ENCODE measurements at regions of chr10 and their contacts with region 1.

Region 1: DNA sequence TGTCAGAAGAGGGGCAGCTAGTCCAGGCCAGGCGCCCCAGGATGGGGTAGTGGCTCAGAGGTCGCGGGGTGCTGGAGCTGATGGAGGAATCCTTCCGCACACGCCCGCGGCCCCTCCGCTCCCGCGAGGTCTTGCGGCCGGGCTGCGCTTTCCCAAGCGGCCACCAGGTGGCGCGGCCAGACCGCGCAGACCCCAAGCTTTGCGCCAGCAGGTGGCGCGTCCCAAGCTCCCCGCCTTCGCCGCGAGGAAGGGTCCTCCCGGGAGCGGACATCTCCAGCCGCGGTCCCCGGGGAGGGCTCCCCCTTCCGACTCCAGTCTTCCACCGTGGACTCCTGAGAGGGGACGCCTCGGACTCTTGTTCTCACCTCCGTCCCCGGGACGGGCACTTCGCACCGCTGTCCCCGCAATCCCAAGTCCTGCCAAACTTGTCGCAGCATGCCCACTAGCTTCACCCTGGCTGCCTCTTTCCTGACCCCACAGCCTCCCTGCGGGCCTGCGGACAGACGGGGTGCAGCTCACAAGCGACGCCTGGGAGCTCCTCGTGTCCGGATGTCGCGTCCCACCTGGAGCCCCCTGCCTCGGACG is 19.4 kb downstream of the KCNK18 start:
- DNase-seq: no peak
- H3K4me3 ChIP-seq: peak overlapping the region; percentile 46 to 62
- H3K27ac ChIP-seq: no peak overlapping the region
- H3K4me1 ChIP-seq: peaks cover 0 to 8% of the 10 kb centered on the region in 2 donors
- H3K27me3 ChIP-seq: peaks cover 18% of the 10 kb centered on the region
- CTCF ChIP-seq: peak; percentile 98 to 100 (median 99)

Region 2: DNA sequence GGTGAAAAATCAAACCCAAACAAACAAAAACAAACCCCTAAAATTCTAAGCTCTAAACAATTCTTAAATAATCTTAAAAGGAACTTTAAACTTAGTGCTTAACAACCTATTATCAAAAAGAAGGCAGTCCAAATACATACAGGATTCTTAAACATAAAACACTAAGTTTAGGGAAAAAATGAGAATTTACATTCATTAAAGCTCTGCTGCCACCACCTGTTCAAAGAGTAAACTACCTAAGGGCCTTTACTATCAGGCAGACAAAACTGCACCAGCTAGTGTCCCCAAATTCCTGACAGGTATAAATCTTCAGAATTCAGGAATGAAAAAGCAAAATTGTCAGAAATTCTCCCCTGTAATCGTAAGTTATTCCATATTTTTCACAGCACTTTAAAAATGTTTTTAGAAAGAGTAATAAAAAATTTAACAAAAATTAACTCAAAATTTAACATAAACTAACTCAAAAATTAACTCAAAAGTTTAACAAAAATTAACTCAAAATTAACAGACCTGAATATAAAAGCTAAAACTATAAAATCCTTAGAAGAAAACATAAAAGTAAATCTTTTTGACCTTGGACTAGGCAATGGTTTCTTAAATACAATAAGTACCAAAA is 103.5 kb after region 1 on chr10:
- intact Hi-C with region 1: loop called (anchors 2 kb)
- DNase-seq: no peak
- H3K4me3 ChIP-seq: no peak overlapping the region
- H3K27ac ChIP-seq: no peak overlapping the region
- H3K4me1 ChIP-seq: no peaks in the 10 kb centered on the region
- H3K27me3 ChIP-seq: no peaks in the 10 kb centered on the region
- CTCF ChIP-seq: peak in 2 of 3 experiments; percentile 31 to 42

Region 3: DNA sequence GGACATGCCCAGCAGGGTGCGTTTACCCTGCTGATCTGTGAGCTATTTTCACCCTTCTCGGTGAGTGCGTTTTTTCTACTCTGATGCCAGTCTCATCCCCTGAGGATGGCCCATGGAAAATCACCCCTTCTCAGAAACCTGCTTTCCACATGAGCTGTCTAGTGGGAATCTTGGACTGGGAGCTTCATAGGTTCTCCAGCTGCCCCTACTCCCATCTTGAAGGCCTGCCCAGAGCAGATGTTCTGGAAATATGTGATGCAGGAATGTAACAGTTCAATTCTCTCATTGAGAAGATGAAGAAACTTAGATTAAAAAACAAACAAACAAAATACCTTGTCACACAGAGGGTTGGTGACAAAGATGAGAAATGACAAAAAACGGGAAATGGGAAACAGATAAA is 976.9 kb after region 1 on chr10:
- intact Hi-C with region 1: no loop called
- DNase-seq: no peak
- H3K4me3 ChIP-seq: no peak overlapping the region
- H3K27ac ChIP-seq: no peak overlapping the region
- H3K4me1 ChIP-seq: no peaks in the 10 kb centered on the region
- H3K27me3 ChIP-seq: no peaks in the 10 kb centered on the region
- CTCF ChIP-seq: no peak

Region 4: DNA sequence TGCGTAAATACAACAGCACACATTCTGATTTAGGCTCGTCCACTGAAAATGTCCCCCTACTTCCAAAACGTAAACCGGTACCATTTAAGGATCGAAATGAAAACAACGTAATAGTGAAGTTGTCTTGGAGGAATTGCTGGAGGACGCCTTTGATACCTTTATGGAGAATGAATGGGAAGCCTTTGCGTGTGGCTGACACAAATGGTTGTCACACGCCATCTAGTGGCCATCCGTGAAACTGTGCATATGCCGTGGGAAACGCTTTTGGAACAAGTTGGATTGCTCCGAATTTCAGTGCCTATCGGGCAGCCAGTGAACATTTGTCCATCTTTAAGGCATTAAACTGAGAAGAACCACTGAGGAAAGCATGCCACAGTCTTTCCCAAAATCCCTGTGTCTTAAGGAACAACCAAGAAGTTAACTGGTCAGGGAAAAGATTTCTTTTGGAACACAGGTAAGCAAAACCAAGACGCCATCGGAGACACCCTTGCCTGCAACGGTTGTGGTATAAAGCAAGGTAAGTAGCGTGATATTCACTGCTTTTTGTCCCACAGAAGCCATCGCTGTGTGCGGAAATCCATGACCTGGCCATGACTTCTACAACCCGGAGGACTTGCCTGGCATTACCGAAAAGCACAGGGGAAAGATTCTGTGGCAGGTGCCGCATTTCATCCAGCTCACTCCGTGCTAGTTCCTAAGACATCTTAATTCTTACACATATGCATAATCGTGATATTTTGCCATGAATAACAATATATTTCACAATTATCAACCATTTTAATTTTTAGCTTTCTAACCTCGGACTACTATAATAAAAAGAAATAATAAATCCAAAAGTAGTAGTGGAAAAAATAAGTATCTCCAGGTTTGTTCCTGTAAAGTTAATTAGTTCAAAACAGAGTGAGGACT is 1024.8 kb after region 1 on chr10:
- intact Hi-C with region 1: loop called (anchors 1 kb)
- DNase-seq: peak in 1 of 2 donors; percentile 89
- H3K4me3 ChIP-seq: no peak overlapping the region
- H3K27ac ChIP-seq: no peak overlapping the region
- H3K4me1 ChIP-seq: peaks cover 0 to 3% of the 10 kb centered on the region in 2 donors
- H3K27me3 ChIP-seq: peaks cover under 1% of the 10 kb centered on the region
- CTCF ChIP-seq: peak; percentile 76 to 94 (median 90)